GM12878 (cell line): ENCODE measurements at regions of chr17 and their contacts with region 1.

Region 1: DNA sequence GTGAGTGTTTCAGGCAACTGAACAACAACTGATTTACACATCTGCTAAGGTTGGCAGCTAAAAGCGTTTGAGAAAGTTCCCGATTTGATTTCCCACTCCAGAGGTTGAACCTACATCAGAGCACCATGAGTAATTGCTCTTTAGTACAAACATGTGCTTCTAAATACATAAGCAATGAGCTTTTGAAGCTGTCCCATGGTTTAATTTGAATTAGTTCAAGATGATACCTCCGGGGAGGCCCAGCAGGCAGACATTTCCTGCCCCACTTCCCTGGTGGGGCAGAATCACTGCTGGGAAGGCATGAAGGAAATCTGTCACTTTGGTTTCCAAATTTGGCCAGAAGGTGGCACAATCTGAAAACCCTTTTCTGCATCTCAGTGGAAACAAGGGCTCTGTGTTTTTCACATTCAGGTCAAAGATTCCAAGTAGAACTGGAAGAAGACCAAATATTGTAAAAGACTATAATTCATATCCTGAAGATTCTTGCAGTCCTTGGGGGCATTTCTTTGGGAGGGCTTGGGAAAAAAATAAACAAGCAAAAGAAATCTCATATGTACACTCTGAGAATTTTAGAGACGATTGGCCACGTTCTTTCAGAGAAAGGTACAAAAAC is 176.2 kb upstream of the FAM20A start:
- DNase-seq: no peak
- ATAC-seq: peak; percentile 75
- H3K4me3 ChIP-seq: no peak overlapping the region
- H3K27ac ChIP-seq: no peak overlapping the region
- H3K4me1 ChIP-seq: peaks cover 11% of the 10 kb centered on the region
- H3K27me3 ChIP-seq: no peaks in the 10 kb centered on the region
- CTCF ChIP-seq: peak; percentile 57 to 78 (median 64)
- EP300 ChIP-seq: no peak
- POLR2A ChIP-seq: no peak
- RAD21 ChIP-seq: peak; percentile 82

Region 2: GRCh38 chr17:68753985-68754769 is 23.2 kb before region 1 on chr17:
- CTCF ChIA-PET with region 1: no interaction called
- POLR2A ChIA-PET with region 1: no interaction called
- RAD21 ChIA-PET with region 1: no interaction called
- SMC1A ChIA-PET with region 1: no interaction called
- in situ Hi-C with region 1: no loop called
- intact Hi-C with region 1: no loop called
- DNase-seq: no peak
- ATAC-seq: no peak
- H3K4me3 ChIP-seq: no peak overlapping the region
- H3K27ac ChIP-seq: no peak overlapping the region
- H3K4me1 ChIP-seq: no peaks in the 10 kb centered on the region
- H3K27me3 ChIP-seq: no peaks in the 10 kb centered on the region
- CTCF ChIP-seq: no peak
- EP300 ChIP-seq: no peak
- POLR2A ChIP-seq: no peak
- RAD21 ChIP-seq: no peak

Region 3: GRCh38 chr17:68794636-68795434 is 17.5 kb after region 1 on chr17:
- CTCF ChIA-PET with region 1: interaction called, 35 read pairs
- POLR2A ChIA-PET with region 1: no interaction called
- RAD21 ChIA-PET with region 1: interaction called, 10 read pairs
- SMC1A ChIA-PET with region 1: interaction called, 18 read pairs
- in situ Hi-C with region 1: no loop called
- intact Hi-C with region 1: no loop called
- DNase-seq: no peak
- ATAC-seq: peak; percentile 72
- H3K4me3 ChIP-seq: peak overlapping the region; percentile 7; the same call in 1 of the 2 replicates
- H3K27ac ChIP-seq: peak overlapping the region; percentile 38
- H3K4me1 ChIP-seq: peaks cover 4% of the 10 kb centered on the region; the same call in 1 of the 2 replicates
- H3K27me3 ChIP-seq: no peaks in the 10 kb centered on the region
- CTCF ChIP-seq: peak; percentile 10 to 41 (median 33); a peak in 3 of 6 replicates
- EP300 ChIP-seq: no peak
- POLR2A ChIP-seq: no peak
- RAD21 ChIP-seq: peak; percentile 48

Region 4: DNA sequence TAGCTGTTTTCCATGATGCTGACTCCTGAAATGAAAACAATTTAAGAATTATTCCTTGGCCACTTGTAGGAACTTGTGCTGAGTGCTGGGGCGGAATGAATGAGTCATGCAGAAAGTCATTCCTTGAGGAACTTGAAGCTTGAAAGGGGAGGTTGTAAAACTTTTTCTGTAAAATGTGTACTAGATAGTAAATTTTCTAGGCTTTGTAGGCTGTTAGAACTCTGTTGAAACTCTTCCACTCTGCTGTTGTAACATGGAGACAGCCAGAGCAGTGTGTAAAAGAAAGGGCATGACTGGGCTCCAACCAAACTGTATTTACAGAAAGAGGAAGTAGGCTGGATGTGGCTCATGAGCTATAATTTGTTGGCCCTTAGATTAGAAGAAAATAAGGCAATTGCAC is 131.7 kb after region 1 on chr17:
- CTCF ChIA-PET with region 1: interaction called, 30 read pairs
- POLR2A ChIA-PET with region 1: no interaction called
- RAD21 ChIA-PET with region 1: interaction called, 5 read pairs
- SMC1A ChIA-PET with region 1: interaction called, 5 read pairs
- in situ Hi-C with region 1: no loop called
- intact Hi-C with region 1: loop called (anchors 2 kb)
- DNase-seq: peak; percentile 16
- ATAC-seq: peak; percentile 81
- H3K4me3 ChIP-seq: no peak overlapping the region
- H3K27ac ChIP-seq: no peak overlapping the region
- H3K4me1 ChIP-seq: peaks cover 3% of the 10 kb centered on the region; the same call in 1 of the 2 replicates
- H3K27me3 ChIP-seq: no peaks in the 10 kb centered on the region
- CTCF ChIP-seq: no peak
- EP300 ChIP-seq: no peak
- POLR2A ChIP-seq: no peak
- RAD21 ChIP-seq: no peak

Region 5: GRCh38 chr17:68972119-68972704 is 194.9 kb after region 1 on chr17:
- CTCF ChIA-PET with region 1: interaction called, 12 read pairs
- POLR2A ChIA-PET with region 1: no interaction called
- RAD21 ChIA-PET with region 1: no interaction called
- SMC1A ChIA-PET with region 1: interaction called, 8 read pairs
- in situ Hi-C with region 1: no loop called
- intact Hi-C with region 1: loop called (anchors 5 kb)
- DNase-seq: no peak
- ATAC-seq: peak; percentile 42; the same call in 1 of the 3 replicates
- H3K4me3 ChIP-seq: no peak overlapping the region
- H3K27ac ChIP-seq: no peak overlapping the region
- H3K4me1 ChIP-seq: no peaks in the 10 kb centered on the region
- H3K27me3 ChIP-seq: no peaks in the 10 kb centered on the region
- CTCF ChIP-seq: peak; percentile 42 to 44 (median 43); a peak in 5 of 6 replicates
- EP300 ChIP-seq: no peak
- POLR2A ChIP-seq: no peak
- RAD21 ChIP-seq: peak; percentile 55

Region 6: DNA sequence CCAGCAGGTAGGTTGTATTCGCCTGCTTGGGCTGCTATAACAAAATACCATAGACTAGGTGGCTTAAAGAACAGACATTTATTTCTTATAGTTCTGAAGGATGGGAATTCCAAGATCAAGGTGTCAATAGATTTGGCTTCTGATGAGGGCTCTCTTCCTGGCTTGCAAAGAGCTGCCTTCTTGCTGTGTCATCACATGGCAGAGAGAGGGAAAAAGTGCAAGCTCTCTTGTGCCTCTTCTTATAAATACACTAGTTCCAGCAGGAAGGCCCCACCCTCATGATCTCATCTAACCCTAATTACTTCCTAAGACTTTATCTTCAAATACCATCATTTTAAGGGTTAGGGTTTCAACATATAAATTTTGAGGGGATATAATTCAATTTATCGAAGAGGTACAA is 252.8 kb after region 1 on chr17:
- CTCF ChIA-PET with region 1: no interaction called
- POLR2A ChIA-PET with region 1: no interaction called
- RAD21 ChIA-PET with region 1: no interaction called
- SMC1A ChIA-PET with region 1: no interaction called
- in situ Hi-C with region 1: no loop called
- intact Hi-C with region 1: no loop called
- DNase-seq: no peak
- ATAC-seq: no peak
- H3K4me3 ChIP-seq: no peak overlapping the region
- H3K27ac ChIP-seq: no peak overlapping the region
- H3K4me1 ChIP-seq: no peaks in the 10 kb centered on the region
- H3K27me3 ChIP-seq: no peaks in the 10 kb centered on the region
- CTCF ChIP-seq: no peak
- EP300 ChIP-seq: no peak
- POLR2A ChIP-seq: no peak
- RAD21 ChIP-seq: no peak

Region 7: DNA sequence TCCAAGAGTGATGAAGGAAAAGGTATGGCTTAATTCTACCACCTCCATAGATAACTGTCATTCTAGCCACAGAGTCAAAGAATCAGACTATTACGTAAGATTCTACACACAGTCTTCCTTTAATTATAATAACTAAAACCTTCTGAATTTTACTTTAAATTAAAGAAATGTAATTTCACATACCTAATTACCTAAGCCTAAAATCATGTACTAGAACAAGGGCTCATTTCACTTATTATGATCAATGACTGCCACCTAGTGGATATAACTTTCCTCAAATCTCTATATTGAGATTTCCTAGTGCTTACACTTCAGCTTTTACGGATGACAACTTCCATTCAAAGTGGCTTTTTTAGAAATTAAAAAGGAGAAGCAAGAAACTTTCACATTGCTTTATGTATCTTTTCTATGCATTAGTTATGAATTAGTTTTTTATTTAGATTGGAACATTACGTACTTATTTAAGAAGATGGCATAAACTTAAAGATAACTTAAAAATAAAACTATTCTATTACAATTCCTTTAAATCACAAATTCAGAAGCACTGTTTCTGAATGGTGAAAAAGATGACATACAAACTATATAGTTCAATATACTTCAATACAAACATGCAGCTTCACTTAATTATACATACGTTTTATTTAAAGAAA is 469.5 kb after region 1 on chr17:
- CTCF ChIA-PET with region 1: interaction called, 90 read pairs
- POLR2A ChIA-PET with region 1: no interaction called
- RAD21 ChIA-PET with region 1: interaction called, 13 read pairs
- SMC1A ChIA-PET with region 1: interaction called, 45 read pairs
- in situ Hi-C with region 1: loop called (anchors 5 kb)
- intact Hi-C with region 1: no loop called
- DNase-seq: peak; percentile 25
- ATAC-seq: peak; percentile 85
- H3K4me3 ChIP-seq: no peak overlapping the region
- H3K27ac ChIP-seq: no peak overlapping the region
- H3K4me1 ChIP-seq: no peaks in the 10 kb centered on the region
- H3K27me3 ChIP-seq: no peaks in the 10 kb centered on the region
- CTCF ChIP-seq: peak; percentile 26 to 64 (median 44); a peak in 4 of 6 replicates
- EP300 ChIP-seq: no peak
- POLR2A ChIP-seq: no peak
- RAD21 ChIP-seq: peak; percentile 68